HEK293 (cell line): ENCODE measurements at regions of chr22 and their contacts with region 1.

Region 1: GRCh38 chr22:17830043-17830961 is 56.0 kb upstream of the BID start:
- H3K4me3 ChIP-seq: no peak overlapping the region
- H3K27ac ChIP-seq: no peak overlapping the region
- H3K4me1 ChIP-seq: no peaks in the 10 kb centered on the region
- CTCF ChIP-seq: peak; percentile 96

Region 2: DNA sequence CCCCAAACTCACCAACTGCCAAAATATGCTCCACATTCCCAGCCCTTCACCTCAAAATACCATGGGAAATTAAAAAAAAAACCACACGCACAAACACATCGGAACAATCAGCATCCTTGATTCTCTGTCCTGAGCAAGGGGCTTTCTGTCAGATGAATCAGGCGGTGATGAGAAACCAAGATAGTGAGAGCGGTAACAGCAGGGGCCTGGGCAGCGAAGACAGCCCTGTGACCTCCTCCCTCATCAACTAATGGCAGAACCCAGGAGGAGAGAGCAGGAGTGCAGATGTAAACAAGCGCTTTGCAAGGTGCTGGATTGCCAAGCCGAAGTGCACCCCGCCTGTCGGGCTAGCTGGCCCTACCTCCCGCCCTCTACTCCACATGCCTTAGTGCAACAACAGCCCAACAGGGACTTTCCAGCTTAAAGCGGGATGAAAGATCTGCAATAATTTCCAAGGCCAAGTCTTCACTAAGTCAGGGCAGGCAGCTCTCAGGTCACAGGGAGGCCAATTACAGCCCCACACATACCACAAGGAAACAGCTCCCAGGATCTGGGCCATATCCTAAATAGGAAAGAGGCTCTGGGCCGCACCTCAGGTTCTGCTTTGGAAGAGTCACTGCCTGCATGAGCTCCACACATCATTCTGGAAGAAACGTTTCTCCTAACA is 16.2 kb after region 1 on chr22:
- CTCF ChIA-PET with region 1: interaction called, 20 read pairs
- POLR2A ChIA-PET with region 1: no interaction called
- H3K4me3 ChIP-seq: no peak overlapping the region
- H3K27ac ChIP-seq: no peak overlapping the region
- H3K4me1 ChIP-seq: no peaks in the 10 kb centered on the region
- CTCF ChIP-seq: no peak

Region 3: DNA sequence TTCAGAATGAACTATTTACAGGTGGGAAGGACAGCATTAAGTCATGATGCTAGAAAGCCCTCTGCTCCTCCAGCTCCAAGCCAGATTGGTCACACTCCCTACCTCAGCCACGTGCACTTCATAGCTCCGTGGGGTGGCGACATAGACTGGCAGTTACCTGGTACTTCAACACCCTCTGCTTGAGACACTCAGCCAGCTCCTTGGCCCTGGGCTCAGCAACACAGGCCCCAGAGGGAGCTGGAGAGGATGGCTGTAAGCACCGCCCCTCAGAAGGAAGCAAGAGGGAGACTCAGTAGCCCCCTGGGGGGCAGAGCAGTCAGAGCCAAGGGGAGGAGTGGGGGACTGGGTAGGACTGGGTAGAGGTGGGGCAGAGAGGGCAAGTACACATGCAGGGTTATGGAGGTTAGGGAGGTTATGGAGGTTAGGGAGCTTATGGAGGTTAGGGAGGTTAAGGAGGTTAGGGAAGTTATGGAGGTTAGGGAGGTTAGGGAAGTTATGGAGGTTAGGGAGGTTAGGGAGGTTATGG is 46.1 kb after region 1 on chr22:
- CTCF ChIA-PET with region 1: interaction called, 11 read pairs
- POLR2A ChIA-PET with region 1: no interaction called
- H3K4me3 ChIP-seq: no peak overlapping the region
- H3K27ac ChIP-seq: no peak overlapping the region
- H3K4me1 ChIP-seq: no peaks in the 10 kb centered on the region
- CTCF ChIP-seq: 0 out of 2 replicates have a peak, but pooled peaks have one; percentile 24

Region 4: GRCh38 chr22:17891481-17892167 is 61.3 kb after region 1 on chr22:
- CTCF ChIA-PET with region 1: interaction called, 45 read pairs
- POLR2A ChIA-PET with region 1: no interaction called
- H3K4me3 ChIP-seq: no peak overlapping the region
- H3K27ac ChIP-seq: no peak overlapping the region
- H3K4me1 ChIP-seq: peaks cover 3% of the 10 kb centered on the region; the same call in 1 of the 2 replicates
- CTCF ChIP-seq: 0 out of 2 replicates have a peak, but pooled peaks have one; percentile 25

Region 5: GRCh38 chr22:17931400-17931825 is 101.1 kb after region 1 on chr22:
- CTCF ChIA-PET with region 1: no interaction called
- POLR2A ChIA-PET with region 1: no interaction called
- H3K4me3 ChIP-seq: no peak overlapping the region
- H3K27ac ChIP-seq: no peak overlapping the region
- H3K4me1 ChIP-seq: peaks cover 4% of the 10 kb centered on the region; the same call in 1 of the 2 replicates
- CTCF ChIP-seq: no peak

Region 6: DNA sequence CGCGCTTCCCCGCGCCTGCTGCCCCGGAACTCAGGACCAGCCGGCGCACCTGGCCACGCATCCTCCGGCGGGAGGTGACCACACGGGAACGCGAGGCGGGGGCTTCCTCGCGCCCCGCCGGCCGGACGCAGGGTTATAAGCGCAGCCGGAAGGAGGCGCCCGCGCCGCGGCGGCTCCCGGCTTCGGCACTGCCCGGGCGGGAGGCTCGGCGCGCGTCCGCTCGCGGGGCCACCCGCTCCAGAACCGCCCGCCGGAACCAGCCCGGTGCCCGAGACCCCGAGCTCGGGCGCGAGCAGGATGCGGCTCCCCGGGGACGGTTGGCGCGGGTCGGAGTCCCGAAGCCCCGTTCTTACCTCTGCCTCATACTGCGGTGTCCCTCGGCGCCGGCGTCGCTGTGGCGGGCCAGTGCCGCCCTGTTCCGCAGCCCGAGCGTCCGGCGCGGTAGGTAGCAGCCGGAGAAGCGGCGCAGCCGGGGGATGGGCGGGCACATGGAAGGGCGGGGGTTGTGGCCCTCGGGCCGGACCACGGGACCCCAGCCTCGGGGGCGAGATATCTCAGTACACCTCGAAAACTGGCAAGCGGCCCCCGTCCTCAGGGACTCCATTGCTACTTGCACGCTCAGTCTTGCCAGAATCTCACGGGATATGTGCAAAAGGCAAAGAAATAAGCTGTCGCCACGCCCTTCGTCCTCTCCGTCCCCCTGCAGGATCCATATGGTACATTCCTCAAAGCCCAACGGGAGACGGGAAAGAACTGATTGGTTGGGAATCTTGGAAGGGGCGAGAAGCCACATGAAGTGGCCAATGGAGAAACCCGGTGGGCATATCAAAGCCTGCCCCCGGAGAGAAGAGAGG is 171.0 kb after region 1 on chr22:
- CTCF ChIA-PET with region 1: interaction called, 13 read pairs
- POLR2A ChIA-PET with region 1: no interaction called
- H3K4me3 ChIP-seq: peak overlapping the region; percentile 92
- H3K27ac ChIP-seq: peak overlapping the region; percentile 95
- H3K4me1 ChIP-seq: peaks cover 9% of the 10 kb centered on the region; the same call in 1 of the 2 replicates
- CTCF ChIP-seq: no peak; the same call in 1 of the 2 replicates